PC-3 (cell line): ENCODE measurements at regions of chr21 and their contacts with region 1.

Region 1: GRCh38 chr21:16082038-16082816 is 352.4 kb downstream of the USP25 start:
- DNase-seq: peak; percentile 60
- ATAC-seq: no peak
- H3K4me3 ChIP-seq: peak overlapping the region; percentile 7; the same call in 1 of the 2 replicates
- H3K27ac ChIP-seq: no peak overlapping the region
- H3K4me1 ChIP-seq: peaks cover 63% of the 10 kb centered on the region
- H3K27me3 ChIP-seq: peaks cover 5% of the 10 kb centered on the region; the same call in 1 of the 2 replicates
- CTCF ChIP-seq: peak; percentile 66

Region 2: DNA sequence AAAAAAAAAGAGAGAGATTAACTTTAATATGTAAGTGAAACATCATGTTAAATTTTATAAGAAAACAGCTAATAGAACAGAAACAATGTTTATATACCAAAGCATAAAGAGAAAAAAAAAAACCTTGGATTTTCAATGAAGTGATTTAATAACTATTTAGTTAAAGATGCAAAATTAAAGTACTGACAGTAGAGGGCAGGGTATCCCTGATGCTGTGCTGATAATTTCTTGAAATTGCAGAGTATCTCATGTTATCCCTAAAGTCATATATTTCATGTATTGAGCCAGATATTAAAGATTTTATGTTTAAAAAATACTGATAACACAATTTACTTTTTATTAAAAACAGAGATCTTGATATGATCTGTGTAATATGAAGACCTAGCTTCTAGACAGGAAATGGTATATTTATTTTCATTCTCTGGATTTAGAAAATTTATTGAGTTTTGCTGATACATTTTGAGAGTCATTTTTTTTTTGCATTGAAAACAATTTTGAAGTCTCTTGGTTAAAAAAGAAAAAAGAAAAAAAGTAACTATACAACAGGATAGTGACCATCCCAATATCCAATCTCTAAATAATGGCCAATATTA is 79.3 kb before region 1 on chr21:
- CTCF ChIA-PET with region 1: no interaction called
- POLR2A ChIA-PET with region 1: no interaction called
- intact Hi-C with region 1: loop called (anchors 2 kb)
- DNase-seq: peak; percentile 58
- ATAC-seq: peak; percentile 62
- H3K4me3 ChIP-seq: no peak overlapping the region
- H3K27ac ChIP-seq: no peak overlapping the region
- H3K4me1 ChIP-seq: no peaks in the 10 kb centered on the region
- H3K27me3 ChIP-seq: no peaks in the 10 kb centered on the region
- CTCF ChIP-seq: peak; percentile 78

Region 3: GRCh38 chr21:16117851-16118592 is 35.8 kb after region 1 on chr21:
- CTCF ChIA-PET with region 1: no interaction called
- POLR2A ChIA-PET with region 1: no interaction called
- intact Hi-C with region 1: loop called (anchors 2 kb)
- DNase-seq: peak; percentile 90
- ATAC-seq: peak; percentile 100
- H3K4me3 ChIP-seq: peak overlapping the region; percentile 33; the same call in 1 of the 2 replicates
- H3K27ac ChIP-seq: no peak overlapping the region
- H3K4me1 ChIP-seq: peaks cover 18% of the 10 kb centered on the region
- H3K27me3 ChIP-seq: no peaks in the 10 kb centered on the region
- CTCF ChIP-seq: no peak

Region 4: DNA sequence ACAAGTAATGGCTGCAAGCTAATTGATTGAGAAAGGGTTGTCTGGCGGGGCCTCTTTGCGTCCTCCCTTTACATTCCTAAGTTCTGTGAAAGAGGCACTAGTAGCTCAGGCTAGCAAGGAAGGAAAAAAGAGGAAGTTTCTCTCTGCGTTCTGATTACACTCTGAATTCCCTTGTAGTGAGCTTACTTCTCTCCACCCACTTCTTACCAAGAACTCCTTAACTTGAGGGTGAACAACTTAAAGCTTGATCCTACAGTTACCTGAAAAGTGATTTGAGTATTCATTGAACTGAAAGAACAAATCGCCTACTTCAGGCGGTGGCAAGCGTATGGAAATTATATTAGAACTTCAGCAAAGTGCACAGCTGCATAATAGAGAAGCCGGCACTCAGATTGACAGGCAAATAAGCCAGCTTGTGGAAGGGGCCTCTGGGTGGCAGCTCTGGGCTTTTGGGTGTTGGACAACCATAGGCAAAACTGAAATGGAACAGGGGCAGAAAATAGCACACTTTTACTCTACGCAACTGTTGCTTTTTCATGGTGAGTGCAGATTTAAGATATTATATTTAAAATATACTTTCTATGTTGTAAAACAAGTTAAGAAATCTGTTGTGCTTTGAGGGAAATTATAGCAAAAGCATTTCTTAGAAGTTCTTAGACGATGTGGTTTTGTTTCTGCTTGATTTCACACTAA is 112.0 kb after region 1 on chr21:
- CTCF ChIA-PET with region 1: interaction called, 3 read pairs
- POLR2A ChIA-PET with region 1: no interaction called
- intact Hi-C with region 1: loop called (anchors 2 kb)
- DNase-seq: peak; percentile 35
- ATAC-seq: peak; percentile 75
- H3K4me3 ChIP-seq: peak overlapping the region; percentile 48
- H3K27ac ChIP-seq: peak overlapping the region; percentile 2; the same call in 1 of the 2 replicates
- H3K4me1 ChIP-seq: no peaks in the 10 kb centered on the region
- H3K27me3 ChIP-seq: peaks cover 48% of the 10 kb centered on the region
- CTCF ChIP-seq: no peak; the same call in 1 of the 2 replicates